AG04450 (cell line): ENCODE measurements at regions of chr6 and their contacts with region 1.

Region 1: DNA sequence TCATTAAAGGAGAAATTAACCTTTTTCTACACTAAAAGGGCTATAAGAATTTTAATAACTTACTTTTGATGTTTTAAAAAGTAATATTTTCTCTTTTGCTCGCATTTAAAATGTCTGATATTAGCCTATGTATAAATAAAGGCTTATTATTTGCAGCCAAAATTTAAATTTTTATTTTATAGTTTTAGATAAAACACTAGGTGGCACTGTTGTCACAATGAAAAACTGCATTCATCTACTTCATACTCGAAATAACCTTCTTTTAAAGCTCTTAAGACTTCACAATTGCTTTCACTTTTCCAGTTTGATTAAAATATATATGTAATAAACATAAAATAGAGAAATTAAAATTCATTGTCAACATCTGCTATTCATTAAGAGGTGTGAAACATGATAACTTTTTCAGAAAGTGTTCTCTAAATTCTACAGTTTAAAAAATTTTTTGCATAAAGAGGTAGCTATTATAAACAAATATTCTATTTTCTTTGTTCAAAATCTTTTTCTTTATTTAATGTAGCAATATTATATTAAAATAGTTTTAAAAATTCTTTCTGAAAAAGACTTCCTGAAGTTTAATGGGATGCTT is 78.8 kb upstream of the DEFB112 start:
- DNase-seq: no peak
- H3K4me3 ChIP-seq: no peak overlapping the region
- H3K27ac ChIP-seq: no peak overlapping the region
- H3K27me3 ChIP-seq: no peaks in the 10 kb centered on the region
- CTCF ChIP-seq: peak; percentile 48

Region 2: DNA sequence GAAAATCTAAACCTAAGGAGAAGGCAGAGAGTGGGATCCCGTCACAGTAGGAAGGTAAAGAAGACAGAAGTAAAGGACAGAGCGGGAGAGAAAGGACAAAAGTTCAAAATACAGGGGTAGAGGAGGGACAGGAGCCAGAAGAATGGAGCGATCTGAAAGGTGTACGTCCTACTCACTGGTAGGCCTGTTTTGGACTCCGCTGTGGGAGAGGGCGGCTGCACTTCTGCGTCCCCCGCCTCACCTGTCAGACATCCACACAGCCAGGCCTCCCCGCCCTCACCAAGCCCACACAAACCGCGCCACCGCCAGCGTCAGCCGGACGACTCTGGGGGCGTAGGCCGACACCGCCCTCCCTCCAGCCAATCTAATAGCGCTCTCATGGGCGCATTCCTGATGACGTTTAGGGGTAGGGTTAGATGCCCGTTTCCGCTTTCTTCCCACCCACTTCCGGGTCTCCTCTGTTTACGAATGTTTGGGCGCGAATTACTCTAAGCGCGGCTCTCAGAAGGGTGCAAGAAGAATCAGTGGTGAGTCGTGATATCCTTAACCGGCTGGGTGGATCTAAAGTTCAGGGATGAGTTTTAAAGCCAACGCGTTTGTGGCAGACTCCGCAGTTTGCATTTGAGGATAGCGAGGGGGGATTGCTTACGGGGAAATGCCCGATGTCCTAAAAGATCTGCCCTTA is 665.4 kb before region 1 on chr6 and contains the starts of genes CENPQ and MMUT:
- CTCF ChIA-PET with region 1: no interaction called
- POLR2A ChIA-PET with region 1: no interaction called
- DNase-seq: peak; percentile 71
- H3K4me3 ChIP-seq: peak within 1 kb of the TSS; percentile 94
- H3K27ac ChIP-seq: peak within 1 kb of the TSS; percentile 65
- H3K27me3 ChIP-seq: no peaks in the 10 kb centered on the region
- CTCF ChIP-seq: no peak
- polyA plus RNA-seq, gene CENPQ: 3.4 and 6.5 TPM in 2 replicates
- polyA plus RNA-seq, gene MMUT: 19.9 and 26.8 TPM in 2 replicates

Region 3: DNA sequence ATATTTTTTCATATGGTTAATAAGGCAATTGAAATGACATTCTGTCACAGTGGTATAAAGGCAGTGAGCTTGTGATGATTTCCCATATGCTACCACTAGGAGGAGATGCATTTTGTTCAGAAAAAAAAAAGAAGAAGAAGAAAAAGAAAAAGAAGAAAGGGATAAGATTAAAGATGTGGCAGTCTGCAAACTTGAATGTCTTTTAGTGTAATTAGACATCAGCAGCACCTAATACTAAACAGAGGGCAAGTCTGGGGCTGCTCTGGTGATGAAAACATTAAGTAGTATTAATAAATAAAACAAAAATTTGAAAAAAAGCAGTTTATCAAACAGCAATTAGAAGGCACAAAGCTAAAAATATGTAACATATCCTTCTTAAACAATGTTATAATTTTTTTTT is 16.6 kb after region 1 on chr6:
- CTCF ChIA-PET with region 1: interaction called, 15 read pairs
- POLR2A ChIA-PET with region 1: no interaction called
- DNase-seq: no peak
- H3K4me3 ChIP-seq: no peak overlapping the region
- H3K27ac ChIP-seq: no peak overlapping the region
- H3K27me3 ChIP-seq: no peaks in the 10 kb centered on the region
- CTCF ChIP-seq: peak; percentile 71

Region 4: GRCh38 chr6:50602292-50602691 is 473.8 kb after region 1 on chr6:
- CTCF ChIA-PET with region 1: interaction called, 36 read pairs
- POLR2A ChIA-PET with region 1: no interaction called
- DNase-seq: no peak
- H3K4me3 ChIP-seq: no peak overlapping the region
- H3K27ac ChIP-seq: no peak overlapping the region
- H3K27me3 ChIP-seq: no peaks in the 10 kb centered on the region
- CTCF ChIP-seq: peak; percentile 77